Aorta (tissue), 5 donors: ENCODE measurements at regions of chr13 and their contacts with region 1.

Region 1: GRCh38 chr13:44435142-44435982 is 61.7 kb downstream of the SERP2 start:
- DNase-seq: peak; percentile 96 to 97
- ATAC-seq: peak; percentile 90
- H3K4me3 ChIP-seq: peak overlapping the region; percentile 84 to 99
- H3K27ac ChIP-seq: peak overlapping the region in 1 of 2 donors; percentile 77
- H3K4me1 ChIP-seq: no peaks in the 10 kb centered on the region
- H3K27me3 ChIP-seq: no peaks in the 10 kb centered on the region

Region 2: GRCh38 chr13:44050450-44051063 is 384.8 kb before region 1 on chr13:
- intact Hi-C with region 1: loop called (anchors 2 kb)
- DNase-seq: no peak
- ATAC-seq: no peak
- H3K4me3 ChIP-seq: no peak overlapping the region
- H3K27ac ChIP-seq: no peak overlapping the region
- H3K4me1 ChIP-seq: peaks cover 3 to 5% of the 10 kb centered on the region in 2 donors
- H3K27me3 ChIP-seq: no peaks in the 10 kb centered on the region

Region 3: DNA sequence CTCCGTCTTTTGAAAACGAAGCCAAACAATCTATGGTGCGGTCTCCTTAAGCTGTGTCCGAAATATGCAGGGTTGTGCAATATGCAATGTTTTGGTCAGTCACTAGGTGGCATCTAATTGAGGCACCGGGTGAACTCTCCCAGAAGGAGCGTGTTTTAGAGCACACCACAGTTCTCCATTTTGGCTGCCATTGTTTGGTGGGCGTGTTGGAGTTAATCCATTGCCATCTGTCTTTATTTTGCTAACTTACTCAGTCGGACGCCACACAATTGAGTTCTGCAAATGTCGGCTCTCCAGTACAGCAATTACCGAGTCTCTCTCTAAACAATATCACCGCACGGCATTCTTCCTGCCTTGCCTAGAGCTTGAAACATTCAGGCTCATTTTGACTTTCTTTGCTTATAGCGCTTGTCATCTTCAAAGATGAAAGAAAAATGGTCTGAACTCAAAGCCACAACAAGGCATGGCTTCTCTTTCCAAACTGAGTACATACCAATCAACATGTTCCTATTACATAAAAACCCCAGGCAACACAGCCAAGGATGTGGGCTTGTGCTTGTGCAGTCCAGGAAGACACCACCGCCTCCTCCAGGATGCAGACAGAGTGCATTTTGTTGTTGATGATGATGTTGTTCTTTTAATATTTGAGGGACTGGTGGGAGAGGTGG is 243.7 kb before region 1 on chr13:
- intact Hi-C with region 1: loop called (anchors 10 kb)
- DNase-seq: no peak
- ATAC-seq: peak; percentile 92
- H3K4me3 ChIP-seq: peak overlapping the region in 1 of 2 donors; percentile 45
- H3K27ac ChIP-seq: no peak overlapping the region
- H3K4me1 ChIP-seq: no peaks in the 10 kb centered on the region
- H3K27me3 ChIP-seq: no peaks in the 10 kb centered on the region

Region 4: DNA sequence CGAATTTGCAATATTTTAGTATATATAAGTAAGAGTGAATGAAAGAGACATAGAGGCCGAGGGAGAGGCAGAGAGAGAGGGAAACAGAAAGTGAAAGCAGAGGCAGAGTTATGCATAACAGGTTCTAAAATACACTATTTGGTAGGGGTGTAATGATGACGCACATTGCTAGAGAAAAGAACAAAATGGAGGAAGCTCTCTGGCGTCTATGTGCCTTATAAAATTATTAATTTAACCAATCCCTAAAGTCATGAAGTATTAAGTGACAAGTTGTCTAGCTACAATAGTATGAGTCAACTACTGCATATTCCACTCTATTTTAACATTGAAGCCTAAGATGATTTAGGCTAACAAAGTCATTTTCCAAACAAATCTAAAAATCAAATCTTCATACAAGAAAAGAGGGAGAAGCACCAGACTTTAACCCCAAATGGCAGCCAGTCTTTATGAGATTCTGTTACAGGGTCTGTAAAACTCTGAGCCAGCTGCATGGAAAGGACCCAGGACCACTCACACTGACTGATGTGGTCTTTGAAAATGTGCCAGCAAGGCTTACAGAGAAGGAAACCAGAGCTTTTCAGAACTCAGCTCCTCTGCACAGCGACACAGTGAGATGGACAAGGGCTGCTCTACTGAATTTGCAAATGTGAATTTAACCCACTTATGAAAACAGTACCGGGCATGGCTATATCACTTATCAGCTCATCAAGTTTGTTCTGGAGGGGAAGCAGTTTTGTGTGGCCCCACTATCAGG is 160.7 kb before region 1 on chr13:
- intact Hi-C with region 1: loop called in 1 of 2 experiments (anchors 2 kb)
- DNase-seq: no peak
- ATAC-seq: peak; percentile 77
- H3K4me3 ChIP-seq: no peak overlapping the region
- H3K27ac ChIP-seq: peak overlapping the region; percentile 89 to 94
- H3K4me1 ChIP-seq: peaks cover 5 to 11% of the 10 kb centered on the region in 2 donors
- H3K27me3 ChIP-seq: no peaks in the 10 kb centered on the region

Region 5: GRCh38 chr13:44312898-44313551 is 122.3 kb before region 1 on chr13:
- intact Hi-C with region 1: loop called in 1 of 2 experiments (anchors 5 kb)
- DNase-seq: no peak
- ATAC-seq: no peak
- H3K4me3 ChIP-seq: no peak overlapping the region
- H3K27ac ChIP-seq: no peak overlapping the region
- H3K4me1 ChIP-seq: peaks cover 5 to 6% of the 10 kb centered on the region in 2 donors
- H3K27me3 ChIP-seq: no peaks in the 10 kb centered on the region